PC-9 (cell line): ENCODE measurements at regions of chr6 and their contacts with region 1.

Region 1: DNA sequence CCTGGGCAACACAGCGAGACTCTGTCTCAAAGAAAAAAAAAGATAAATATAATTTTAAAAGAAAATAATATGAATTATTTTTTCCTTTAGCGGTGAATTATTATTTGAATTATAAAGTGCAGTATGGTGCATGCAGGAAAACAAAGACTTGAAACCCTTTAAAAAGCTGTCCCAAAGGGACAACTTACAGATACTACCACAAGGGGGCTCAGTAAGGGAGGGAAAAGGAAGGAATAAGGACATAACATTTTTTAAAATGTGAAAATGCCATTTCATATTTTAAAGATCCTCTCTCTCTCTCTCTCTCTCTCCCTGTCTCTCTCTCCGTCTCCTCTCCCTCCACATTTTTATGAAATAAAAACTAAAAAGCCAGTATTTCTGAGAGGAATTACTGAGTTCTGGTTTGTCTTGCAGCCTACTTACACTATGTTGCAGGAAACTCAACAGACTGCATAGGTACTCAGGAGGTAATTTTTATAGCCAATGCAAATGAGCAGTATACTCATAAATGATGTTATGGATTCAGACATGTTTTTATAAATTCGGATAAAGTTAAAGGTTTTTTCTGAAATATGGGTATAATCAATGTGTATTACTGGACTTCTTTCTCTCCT is 455.0 kb upstream of the GJE1 start:
- DNase-seq: no peak
- H3K4me3 ChIP-seq: no peak overlapping the region
- H3K27ac ChIP-seq: no peak overlapping the region
- H3K4me1 ChIP-seq: no peaks in the 10 kb centered on the region
- H3K27me3 ChIP-seq: no peaks in the 10 kb centered on the region
- CTCF ChIP-seq: peak; percentile 66

Region 2: GRCh38 chr6:142112451-142113061 is 434.9 kb after region 1 on chr6:
- CTCF ChIA-PET with region 1: no interaction called
- POLR2A ChIA-PET with region 1: no interaction called
- intact Hi-C with region 1: loop called (anchors 2 kb)
- DNase-seq: peak; percentile 58 to 60
- H3K4me3 ChIP-seq: no peak overlapping the region
- H3K27ac ChIP-seq: no peak overlapping the region
- H3K4me1 ChIP-seq: no peaks in the 10 kb centered on the region
- H3K27me3 ChIP-seq: no peaks in the 10 kb centered on the region
- CTCF ChIP-seq: peak; percentile 89